CD4-positive, alpha-beta memory T cell (primary cell): ENCODE measurements at regions of chr22 and their contacts with region 1.

Region 1: GRCh38 chr22:17171313-17172171 is 12.5 kb upstream of the HDHD5 start:
- DNase-seq: peak; percentile 61 to 74 (median 71)
- H3K4me3 ChIP-seq: peak overlapping the region in 1 of 2 donors; percentile 78
- H3K4me3 Mint-ChIP-seq: peak overlapping the region; percentile 79 to 90 (median 87)
- H3K27ac ChIP-seq: peak overlapping the region; percentile 50
- H3K27ac Mint-ChIP-seq: peak overlapping the region; percentile 32 to 90 (median 80)
- H3K4me1 ChIP-seq: peaks cover 5% of the 10 kb centered on the region
- H3K4me1 Mint-ChIP-seq: peaks cover 2 to 8% (median 5%) of the 10 kb centered on the region in 4 donors
- H3K27me3 ChIP-seq: no peaks in the 10 kb centered on the region
- H3K27me3 Mint-ChIP-seq: no peaks in the 10 kb centered on the region

Region 2: GRCh38 chr22:16989915-16990314 is 181.6 kb before region 1 on chr22:
- CTCF ChIA-PET with region 1: no interaction called
- POLR2A ChIA-PET with region 1: no interaction called
- intact Hi-C with region 1: no loop called
- DNase-seq: no peak
- H3K4me3 ChIP-seq: no peak overlapping the region
- H3K4me3 Mint-ChIP-seq: no peak overlapping the region
- H3K27ac ChIP-seq: no peak overlapping the region
- H3K27ac Mint-ChIP-seq: no peak overlapping the region
- H3K4me1 ChIP-seq: no peaks in the 10 kb centered on the region
- H3K4me1 Mint-ChIP-seq: peaks cover 0 to 1% (median 0%) of the 10 kb centered on the region in 4 donors
- H3K27me3 ChIP-seq: no peaks in the 10 kb centered on the region
- H3K27me3 Mint-ChIP-seq: peaks cover 2 to 18% of the 10 kb centered on the region in 2 donors

Region 3: DNA sequence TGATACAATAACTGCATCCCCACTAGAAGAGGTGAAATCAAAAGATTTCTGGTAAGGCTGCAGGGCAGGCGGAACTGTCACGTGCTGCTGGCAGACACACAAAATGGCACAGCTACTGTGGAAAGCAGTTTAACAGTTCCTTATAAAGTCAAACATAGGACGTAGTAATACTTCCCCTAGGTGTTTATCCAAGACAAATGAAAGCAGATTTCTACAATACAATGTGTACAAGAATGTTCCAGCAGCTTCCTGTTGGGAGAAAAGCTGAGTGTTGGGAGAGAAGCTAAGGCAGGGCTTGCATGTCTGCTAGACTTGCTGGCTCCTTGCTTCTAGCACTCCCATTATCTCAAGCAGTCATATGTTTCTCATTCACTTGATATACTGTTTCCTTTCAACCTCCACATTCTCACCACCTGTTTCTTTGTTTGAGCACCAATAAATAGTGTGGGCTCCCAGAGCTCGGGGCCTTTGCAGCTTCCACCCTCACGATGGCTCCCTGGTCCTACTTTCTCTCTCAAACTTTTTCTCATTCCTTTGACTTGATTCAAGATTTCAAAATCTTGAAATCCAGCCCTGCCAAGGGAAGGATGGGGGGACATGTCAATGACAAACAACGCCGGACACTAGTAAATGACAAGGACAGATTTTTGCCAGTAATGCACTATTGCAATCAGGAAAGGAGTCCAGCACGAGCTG is 108.0 kb before region 1 on chr22:
- CTCF ChIA-PET with region 1: interaction called, 10 read pairs
- POLR2A ChIA-PET with region 1: no interaction called
- intact Hi-C with region 1: no loop called
- DNase-seq: no peak
- H3K4me3 ChIP-seq: no peak overlapping the region
- H3K4me3 Mint-ChIP-seq: no peak overlapping the region
- H3K27ac ChIP-seq: no peak overlapping the region
- H3K27ac Mint-ChIP-seq: no peak overlapping the region
- H3K4me1 ChIP-seq: no peaks in the 10 kb centered on the region
- H3K4me1 Mint-ChIP-seq: peaks cover 0 to 4% (median 1%) of the 10 kb centered on the region in 4 donors
- H3K27me3 ChIP-seq: no peaks in the 10 kb centered on the region
- H3K27me3 Mint-ChIP-seq: peaks cover 8 to 12% of the 10 kb centered on the region in 2 donors

Region 4: DNA sequence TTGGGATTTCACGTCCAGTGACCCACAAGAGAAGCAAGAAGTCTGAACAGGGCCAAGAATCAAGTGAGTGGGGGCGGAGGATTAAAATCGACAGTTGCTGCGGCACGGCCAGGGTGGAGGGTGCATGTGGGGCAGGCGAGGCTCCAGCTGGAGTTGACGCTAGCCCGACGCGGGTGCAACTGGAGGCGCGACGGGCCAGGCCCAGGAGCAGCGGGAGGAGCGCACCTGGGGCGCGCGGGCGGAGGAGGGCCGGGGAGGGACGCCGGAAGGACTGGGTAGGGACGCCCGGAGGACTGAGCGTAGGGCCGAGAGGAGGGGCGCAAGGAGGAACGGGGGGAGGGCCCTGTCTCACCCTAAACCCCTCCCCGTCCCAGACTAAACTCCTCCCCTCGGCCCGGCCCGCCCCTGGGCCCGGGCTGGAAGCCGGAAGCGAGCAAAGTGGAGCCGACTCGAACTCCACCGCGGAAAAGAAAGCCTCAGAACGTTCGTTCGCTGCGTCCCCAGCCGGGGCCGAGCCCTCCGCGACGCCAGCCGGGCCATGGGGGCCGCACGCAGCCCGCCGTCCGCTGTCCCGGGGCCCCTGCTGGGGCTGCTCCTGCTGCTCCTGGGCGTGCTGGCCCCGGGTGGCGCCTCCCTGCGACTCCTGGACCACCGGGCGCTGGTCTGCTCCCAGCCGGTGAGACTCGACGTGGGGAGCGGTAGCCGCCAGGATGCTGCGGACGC is 86.8 kb before region 1 on chr22 and contains the start of gene IL17RA:
- CTCF ChIA-PET with region 1: interaction called, 174 read pairs
- POLR2A ChIA-PET with region 1: interaction called, 9 read pairs
- intact Hi-C with region 1: no loop called
- DNase-seq: peak; percentile 92 to 97 (median 94)
- H3K4me3 ChIP-seq: peak within 1 kb of the TSS; percentile 58 to 86
- H3K4me3 Mint-ChIP-seq: peak within 1 kb of the TSS; percentile 88 to 99 (median 96)
- H3K27ac ChIP-seq: peak within 1 kb of the TSS; percentile 86
- H3K27ac Mint-ChIP-seq: peak within 1 kb of the TSS; percentile 93 to 97 (median 95)
- H3K4me1 ChIP-seq: peaks cover 47% of the 10 kb centered on the region
- H3K4me1 Mint-ChIP-seq: peaks cover 29 to 50% (median 41%) of the 10 kb centered on the region in 4 donors
- H3K27me3 ChIP-seq: no peaks in the 10 kb centered on the region
- H3K27me3 Mint-ChIP-seq: no peaks in the 10 kb centered on the region
- total RNA-seq, gene IL17RA: 71.6 to 77.2 TPM

Region 5: DNA sequence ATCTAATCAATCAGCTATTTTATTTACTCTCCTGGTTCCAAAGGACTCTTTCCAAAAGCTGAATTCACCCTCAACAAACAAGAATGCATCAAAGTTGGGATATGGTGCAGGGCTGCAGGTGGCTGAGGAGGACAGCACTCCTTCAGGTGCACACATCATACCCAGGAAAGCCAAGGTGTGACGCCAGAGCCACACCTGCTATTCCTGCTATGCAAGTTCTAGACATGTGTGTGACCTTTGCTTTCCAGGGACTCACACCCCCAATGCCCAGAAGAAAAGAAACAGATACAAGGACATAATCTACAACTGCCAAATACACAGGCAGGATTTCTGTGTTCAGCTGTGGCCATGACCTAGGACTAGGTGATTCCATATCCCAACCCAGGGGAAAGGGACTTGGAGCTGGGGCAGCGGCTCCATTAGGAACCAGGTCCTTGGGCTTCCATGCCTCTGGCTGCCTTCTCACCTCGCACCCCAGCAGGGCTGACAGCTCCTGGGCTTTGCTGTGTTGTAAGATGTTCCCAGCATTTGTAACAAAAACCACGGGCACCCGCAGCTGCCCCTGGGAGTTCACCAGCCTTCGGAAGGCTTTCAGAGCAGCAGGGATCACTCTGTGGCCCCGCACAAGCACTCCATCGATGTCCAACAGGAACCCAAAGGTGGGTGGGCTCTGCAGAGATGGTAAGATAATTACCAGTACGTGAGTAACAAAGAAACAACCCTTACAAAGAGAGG is 22.3 kb before region 1 on chr22:
- CTCF ChIA-PET with region 1: interaction called, 13 read pairs
- POLR2A ChIA-PET with region 1: no interaction called
- intact Hi-C with region 1: no loop called
- DNase-seq: no peak
- H3K4me3 ChIP-seq: no peak overlapping the region
- H3K4me3 Mint-ChIP-seq: no peak overlapping the region
- H3K27ac ChIP-seq: no peak overlapping the region
- H3K27ac Mint-ChIP-seq: peak overlapping the region in 1 of 7 donors; percentile 36
- H3K4me1 ChIP-seq: peaks cover 5% of the 10 kb centered on the region
- H3K4me1 Mint-ChIP-seq: peaks cover 8 to 21% (median 11%) of the 10 kb centered on the region in 4 donors
- H3K27me3 ChIP-seq: no peaks in the 10 kb centered on the region
- H3K27me3 Mint-ChIP-seq: no peaks in the 10 kb centered on the region

Region 6: DNA sequence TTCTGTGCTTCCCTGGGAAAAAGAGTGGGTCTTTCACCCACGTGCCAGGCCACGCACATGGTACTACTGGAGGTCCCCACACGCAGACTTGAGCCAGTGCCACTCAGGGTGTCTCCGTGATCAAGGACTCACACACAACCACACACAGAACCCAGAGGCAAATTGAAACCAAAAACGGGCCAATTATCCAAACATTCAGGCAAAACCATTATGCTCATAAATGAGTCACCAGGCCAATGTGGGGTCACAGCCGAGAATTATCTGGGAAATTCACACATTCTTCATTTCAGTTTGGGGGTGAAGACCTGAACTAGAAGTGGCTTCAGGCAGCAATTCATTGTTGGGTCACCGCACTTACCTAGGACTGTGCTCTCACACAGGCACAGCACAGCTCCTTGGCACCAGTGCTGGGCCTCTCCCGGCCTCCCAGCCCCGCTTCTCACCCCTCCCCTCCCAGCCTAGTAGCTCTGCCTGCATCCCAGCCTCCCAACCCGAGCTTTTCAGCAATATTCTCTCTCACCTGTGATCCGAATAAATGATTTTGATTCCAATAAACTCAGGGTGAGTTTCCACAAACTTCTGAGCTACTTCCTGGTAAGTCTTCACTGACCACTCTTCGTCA is 19.7 kb after region 1 on chr22:
- CTCF ChIA-PET with region 1: interaction called, 17 read pairs
- POLR2A ChIA-PET with region 1: no interaction called
- intact Hi-C with region 1: no loop called
- DNase-seq: no peak
- H3K4me3 ChIP-seq: no peak overlapping the region
- H3K4me3 Mint-ChIP-seq: no peak overlapping the region
- H3K27ac ChIP-seq: no peak overlapping the region
- H3K27ac Mint-ChIP-seq: peak overlapping the region in 4 of 7 donors; percentile 31 to 74 (median 60)
- H3K4me1 ChIP-seq: no peaks in the 10 kb centered on the region
- H3K4me1 Mint-ChIP-seq: peaks cover 0 to 4% (median 0%) of the 10 kb centered on the region in 4 donors
- H3K27me3 ChIP-seq: no peaks in the 10 kb centered on the region
- H3K27me3 Mint-ChIP-seq: no peaks in the 10 kb centered on the region

Region 7: GRCh38 chr22:17258015-17258787 is 86.7 kb after region 1 on chr22:
- CTCF ChIA-PET with region 1: interaction called, 12 read pairs
- POLR2A ChIA-PET with region 1: no interaction called
- intact Hi-C with region 1: no loop called
- DNase-seq: peak; percentile 25 to 58 (median 43)
- H3K4me3 ChIP-seq: no peak overlapping the region
- H3K4me3 Mint-ChIP-seq: peak overlapping the region; percentile 50 to 75 (median 63)
- H3K27ac ChIP-seq: no peak overlapping the region
- H3K27ac Mint-ChIP-seq: peak overlapping the region; percentile 77 to 91 (median 82)
- H3K4me1 ChIP-seq: peaks cover 22% of the 10 kb centered on the region
- H3K4me1 Mint-ChIP-seq: peaks cover 15 to 23% (median 20%) of the 10 kb centered on the region in 4 donors
- H3K27me3 ChIP-seq: no peaks in the 10 kb centered on the region
- H3K27me3 Mint-ChIP-seq: no peaks in the 10 kb centered on the region

Region 8: DNA sequence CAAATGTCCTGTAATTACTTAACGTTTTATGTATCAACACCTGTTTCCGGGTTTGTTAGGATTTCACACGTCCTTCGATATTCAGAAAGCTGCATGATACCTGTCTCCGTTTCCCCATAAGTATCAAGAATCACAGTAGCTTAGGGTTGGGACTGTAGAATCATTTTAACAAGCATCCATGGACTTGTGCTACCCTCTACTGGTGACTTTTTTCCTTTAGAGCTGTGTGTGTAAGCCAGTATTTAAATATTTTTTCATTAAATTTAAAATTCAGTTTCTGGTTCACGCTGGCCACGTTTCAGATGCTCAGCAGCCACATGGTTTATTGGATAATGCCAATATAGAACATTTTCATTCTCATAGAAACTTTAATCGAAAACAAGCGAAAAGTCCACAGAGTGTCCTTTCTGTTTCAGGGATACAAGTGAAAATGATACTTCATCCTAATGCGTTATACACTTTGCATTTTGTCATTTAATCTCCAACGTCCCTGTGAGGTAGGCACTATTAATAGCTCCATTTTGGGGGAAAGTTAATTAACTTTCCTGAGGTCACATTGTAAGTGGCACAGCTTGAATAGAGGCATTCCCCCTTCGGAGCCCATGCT is 330.2 kb after region 1 on chr22:
- CTCF ChIA-PET with region 1: interaction called, 132 read pairs
- POLR2A ChIA-PET with region 1: interaction called, 5 read pairs
- intact Hi-C with region 1: loop called (anchors 1 kb)
- DNase-seq: peak; percentile 45 to 62 (median 61)
- H3K4me3 ChIP-seq: no peak overlapping the region
- H3K4me3 Mint-ChIP-seq: no peak overlapping the region
- H3K27ac ChIP-seq: no peak overlapping the region
- H3K27ac Mint-ChIP-seq: no peak overlapping the region
- H3K4me1 ChIP-seq: no peaks in the 10 kb centered on the region
- H3K4me1 Mint-ChIP-seq: peaks cover 0 to 2% (median 0%) of the 10 kb centered on the region in 4 donors
- H3K27me3 ChIP-seq: no peaks in the 10 kb centered on the region
- H3K27me3 Mint-ChIP-seq: peaks cover 5 to 9% of the 10 kb centered on the region in 2 donors